Right cardiac atrium (tissue), 5 donors: ENCODE measurements at regions of chr18 and their contacts with region 1.

Region 1: GRCh38 chr18:34122724-34123334 is 101.9 kb downstream of the NOL4 start:
- DNase-seq: no peak
- ATAC-seq: no peak
- H3K4me3 ChIP-seq: no peak overlapping the region
- H3K27ac ChIP-seq: no peak overlapping the region
- H3K4me1 ChIP-seq: no peaks in the 10 kb centered on the region
- H3K27me3 ChIP-seq: no peaks in the 10 kb centered on the region

Region 2: DNA sequence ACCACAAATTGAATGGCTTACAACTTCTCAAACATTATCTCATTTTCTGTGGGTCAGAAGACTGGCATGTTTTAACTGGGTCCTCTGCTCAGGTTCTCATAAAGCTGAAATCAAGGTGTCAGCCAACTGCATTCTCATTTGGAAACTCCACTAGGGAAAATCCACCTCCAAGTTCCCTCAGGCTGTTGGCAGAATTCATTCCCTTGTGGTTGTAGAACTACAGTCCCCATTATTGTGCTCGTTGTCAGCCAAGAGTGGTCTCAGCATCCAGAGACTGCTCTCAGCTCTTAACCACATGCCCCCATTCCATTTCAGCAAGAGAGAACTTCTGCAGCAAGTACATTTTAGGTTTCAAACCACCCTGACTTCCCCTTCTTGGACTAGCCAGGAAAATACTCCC is 89.7 kb after region 1 on chr18:
- intact Hi-C with region 1: no loop called
- DNase-seq: no peak
- ATAC-seq: no peak
- H3K4me3 ChIP-seq: no peak overlapping the region
- H3K27ac ChIP-seq: no peak overlapping the region
- H3K4me1 ChIP-seq: no peaks in the 10 kb centered on the region
- H3K27me3 ChIP-seq: no peaks in the 10 kb centered on the region

Region 3: GRCh38 chr18:34322365-34323289 is 199.8 kb after region 1 on chr18:
- intact Hi-C with region 1: loop called in 2 of 4 experiments (anchors 10 kb)
- DNase-seq: peak; percentile 44 to 73 (median 57)
- ATAC-seq: no peak
- H3K4me3 ChIP-seq: peak overlapping the region; percentile 28
- H3K27ac ChIP-seq: no peak overlapping the region
- H3K4me1 ChIP-seq: no peaks in the 10 kb centered on the region
- H3K27me3 ChIP-seq: no peaks in the 10 kb centered on the region